ENCODE measurements at regions of chr7 and their contacts with region 1.

Region 1: GRCh38 chr7:101138213-101138870 is 11.4 kb downstream of the SERPINE1 start:
- DNase-seq: peak; percentile 43 to 95 (median 52)
- H3K4me3 ChIP-seq: no peak overlapping the region
- H3K4me3 Mint-ChIP-seq: peak overlapping the region in 4 of 8 donors; percentile 24 to 76 (median 52)
- H3K27ac ChIP-seq: no peak overlapping the region
- H3K27ac Mint-ChIP-seq: peak overlapping the region in 6 of 7 donors; percentile 51 to 81 (median 80)
- H3K4me1 ChIP-seq: peaks cover 8% of the 10 kb centered on the region
- H3K4me1 Mint-ChIP-seq: peaks cover 3 to 22% (median 8%) of the 10 kb centered on the region in 4 donors
- H3K27me3 ChIP-seq: no peaks in the 10 kb centered on the region
- H3K27me3 Mint-ChIP-seq: peaks cover 13 to 14% of the 10 kb centered on the region in 2 donors

Region 2: GRCh38 chr7:100799014-100799896 is 339.1 kb before region 1 on chr7:
- CTCF ChIA-PET with region 1: no interaction called
- POLR2A ChIA-PET with region 1: no interaction called
- intact Hi-C with region 1: no loop called
- DNase-seq: peak in 4 of 5 donors; percentile 28 to 43 (median 33)
- H3K4me3 ChIP-seq: no peak overlapping the region
- H3K4me3 Mint-ChIP-seq: no peak overlapping the region
- H3K27ac ChIP-seq: no peak overlapping the region
- H3K27ac Mint-ChIP-seq: peak overlapping the region in 3 of 7 donors; percentile 42 to 94 (median 55)
- H3K4me1 ChIP-seq: no peaks in the 10 kb centered on the region
- H3K4me1 Mint-ChIP-seq: peaks cover 0 to 8% (median 0%) of the 10 kb centered on the region in 4 donors
- H3K27me3 ChIP-seq: no peaks in the 10 kb centered on the region
- H3K27me3 Mint-ChIP-seq: peaks cover 9 to 12% of the 10 kb centered on the region in 2 donors

Region 3: DNA sequence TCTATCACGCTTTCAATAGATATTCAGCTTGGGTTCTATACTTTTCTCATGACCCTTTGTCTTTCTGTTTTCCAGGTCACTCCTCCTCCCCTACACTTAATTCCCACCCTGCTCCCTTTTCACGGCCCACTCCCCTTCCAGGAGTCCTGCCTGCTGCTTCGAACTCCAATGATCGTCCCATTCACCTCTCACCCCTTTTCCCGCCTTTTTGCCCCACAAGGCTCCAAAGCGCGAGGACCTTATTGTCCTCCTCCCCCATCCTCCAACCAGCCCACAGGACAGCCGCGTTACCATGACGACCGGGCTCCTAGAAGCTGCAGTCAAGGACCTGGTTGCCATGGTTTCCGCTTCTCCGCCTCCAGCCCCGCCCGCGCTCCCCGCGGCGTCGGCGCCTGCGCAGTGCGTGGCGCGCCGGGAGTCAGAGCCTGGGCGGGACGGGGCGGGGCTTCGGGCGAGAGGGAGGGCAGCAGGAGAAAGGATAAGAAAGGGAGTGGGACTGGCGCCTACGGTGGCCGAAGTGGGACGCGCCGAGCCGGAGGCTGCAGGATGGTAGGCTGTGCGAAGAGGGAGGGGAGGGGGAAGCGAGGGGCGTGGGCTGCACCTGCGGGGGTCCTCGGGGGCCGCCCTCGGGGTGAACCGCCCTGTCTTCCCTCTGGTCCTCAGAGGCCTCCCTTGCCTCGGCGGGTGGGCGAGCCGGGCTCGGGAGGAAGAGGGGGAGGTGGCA is 15.8 kb after region 1 on chr7 and contains the start of gene AP1S1:
- CTCF ChIA-PET with region 1: interaction called, 37 read pairs
- POLR2A ChIA-PET with region 1: no interaction called
- intact Hi-C with region 1: no loop called
- DNase-seq: peak; percentile 90 to 93 (median 91)
- H3K4me3 ChIP-seq: peak within 1 kb of the TSS; percentile 31 to 58
- H3K4me3 Mint-ChIP-seq: peak within 1 kb of the TSS; percentile 81 to 92 (median 86)
- H3K27ac ChIP-seq: no peak within 1 kb of the TSS
- H3K27ac Mint-ChIP-seq: peak within 1 kb of the TSS; percentile 73 to 97 (median 87)
- H3K4me1 ChIP-seq: peaks cover 13% of the 10 kb centered on the region
- H3K4me1 Mint-ChIP-seq: peaks cover 6 to 15% (median 12%) of the 10 kb centered on the region in 4 donors
- H3K27me3 ChIP-seq: no peaks in the 10 kb centered on the region
- H3K27me3 Mint-ChIP-seq: peaks cover 3 to 4% of the 10 kb centered on the region in 2 donors
- total RNA-seq, gene AP1S1: 8.8 to 10.8 TPM

Region 4: GRCh38 chr7:101173752-101174244 is 35.5 kb after region 1 on chr7:
- CTCF ChIA-PET with region 1: interaction called, 44 read pairs
- POLR2A ChIA-PET with region 1: interaction called, 7 read pairs
- intact Hi-C with region 1: no loop called
- DNase-seq: peak; percentile 62 to 67 (median 64)
- H3K4me3 ChIP-seq: no peak overlapping the region
- H3K4me3 Mint-ChIP-seq: peak overlapping the region; percentile 20 to 80 (median 60)
- H3K27ac ChIP-seq: no peak overlapping the region
- H3K27ac Mint-ChIP-seq: peak overlapping the region in 2 of 7 donors; percentile 41 to 76
- H3K4me1 ChIP-seq: peaks cover 56% of the 10 kb centered on the region
- H3K4me1 Mint-ChIP-seq: peaks cover 30 to 56% (median 44%) of the 10 kb centered on the region in 4 donors
- H3K27me3 ChIP-seq: peaks cover 72% of the 10 kb centered on the region
- H3K27me3 Mint-ChIP-seq: peaks cover 60 to 76% of the 10 kb centered on the region in 2 donors

Region 5: GRCh38 chr7:101217388-101218235 is 79.3 kb after region 1 on chr7 and contains the starts of genes PLOD3 and ZNHIT1:
- CTCF ChIA-PET with region 1: interaction called, 17 read pairs
- POLR2A ChIA-PET with region 1: no interaction called
- intact Hi-C with region 1: no loop called
- DNase-seq: peak; percentile 93 to 98 (median 96)
- H3K4me3 ChIP-seq: peak within 1 kb of the TSS; percentile 83 to 86
- H3K4me3 Mint-ChIP-seq: peak within 1 kb of the TSS; percentile 90 to 98 (median 96)
- H3K27ac ChIP-seq: peak within 1 kb of the TSS; percentile 64
- H3K27ac Mint-ChIP-seq: peak within 1 kb of the TSS; percentile 91 to 97 (median 96)
- H3K4me1 ChIP-seq: peaks cover 32% of the 10 kb centered on the region
- H3K4me1 Mint-ChIP-seq: peaks cover 18 to 57% (median 34%) of the 10 kb centered on the region in 4 donors
- H3K27me3 ChIP-seq: no peaks in the 10 kb centered on the region
- H3K27me3 Mint-ChIP-seq: no peaks in the 10 kb centered on the region
- total RNA-seq, gene PLOD3: 64.0 to 72.4 TPM
- total RNA-seq, gene ZNHIT1: 44.6 to 46.0 TPM

Region 6: GRCh38 chr7:101278461-101279292 is 140.3 kb after region 1 on chr7:
- CTCF ChIA-PET with region 1: interaction called, 195 read pairs
- POLR2A ChIA-PET with region 1: no interaction called
- intact Hi-C with region 1: no loop called
- DNase-seq: no peak
- H3K4me3 ChIP-seq: no peak overlapping the region
- H3K4me3 Mint-ChIP-seq: no peak overlapping the region
- H3K27ac ChIP-seq: no peak overlapping the region
- H3K27ac Mint-ChIP-seq: no peak overlapping the region
- H3K4me1 ChIP-seq: peaks cover 5% of the 10 kb centered on the region
- H3K4me1 Mint-ChIP-seq: peaks cover 4 to 8% (median 7%) of the 10 kb centered on the region in 4 donors
- H3K27me3 ChIP-seq: no peaks in the 10 kb centered on the region
- H3K27me3 Mint-ChIP-seq: peaks cover 8 to 26% of the 10 kb centered on the region in 2 donors

Measured in CD4-positive, alpha-beta memory T cell (primary cell).